H1 (cell line): ENCODE measurements at regions of chr1 and their contacts with region 1.

Region 1: GRCh38 chr1:182397771-182398393 is 2.6 kb downstream of the TEDDM1 start:
- DNase-seq: no peak
- H3K4me3 ChIP-seq: no peak overlapping the region
- H3K27ac ChIP-seq: no peak overlapping the region
- H3K4me1 ChIP-seq: peaks cover 3 to 4% (median 3%) of the 10 kb centered on the region in 4 experiments; a peak in 4 of 7 replicates
- H3K27me3 ChIP-seq: no peaks in the 10 kb centered on the region; a peak in 1 of 7 replicates
- CTCF ChIP-seq: no peak
- EP300 ChIP-seq: no peak
- POLR2A ChIP-seq: no peak
- RAD21 ChIP-seq: no peak

Region 2: DNA sequence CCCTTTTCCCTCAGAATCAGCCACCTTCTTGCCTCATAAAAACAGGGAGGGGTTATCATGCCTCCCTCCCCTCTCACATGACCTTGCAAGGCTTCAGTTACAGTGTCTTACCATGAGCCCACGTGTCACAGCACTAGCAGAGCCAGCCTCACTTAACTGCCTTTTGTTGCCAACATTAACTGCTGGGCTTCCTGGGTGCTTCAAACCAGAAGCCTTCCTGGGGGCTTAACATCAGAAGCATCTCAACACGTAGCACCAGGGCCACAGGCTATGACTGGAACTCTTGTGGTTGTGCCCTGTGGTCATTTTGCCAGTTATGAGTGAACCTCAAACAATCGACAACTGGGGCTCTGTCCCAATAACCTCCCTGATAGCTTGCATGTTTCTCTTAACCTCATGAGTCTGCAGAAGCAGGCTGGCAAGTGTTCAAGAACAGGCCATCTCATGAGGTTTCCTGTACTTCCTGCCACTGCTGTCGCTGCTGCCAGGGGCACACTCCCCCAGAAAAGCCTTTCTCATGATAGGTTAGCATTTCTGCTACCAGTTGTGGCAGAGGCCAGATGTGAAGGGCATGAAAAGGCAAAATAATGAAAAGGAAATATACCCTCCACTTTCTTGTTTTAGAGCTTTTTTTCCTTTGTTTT is 138.5 kb before region 1 on chr1:
- CTCF ChIA-PET with region 1: no interaction called
- POLR2A ChIA-PET with region 1: no interaction called
- DNase-seq: no peak
- H3K4me3 ChIP-seq: no peak overlapping the region
- H3K27ac ChIP-seq: no peak overlapping the region
- H3K4me1 ChIP-seq: no peaks in the 10 kb centered on the region
- H3K27me3 ChIP-seq: no peaks in the 10 kb centered on the region
- CTCF ChIP-seq: no peak
- EP300 ChIP-seq: no peak
- POLR2A ChIP-seq: no peak
- RAD21 ChIP-seq: no peak

Region 3: DNA sequence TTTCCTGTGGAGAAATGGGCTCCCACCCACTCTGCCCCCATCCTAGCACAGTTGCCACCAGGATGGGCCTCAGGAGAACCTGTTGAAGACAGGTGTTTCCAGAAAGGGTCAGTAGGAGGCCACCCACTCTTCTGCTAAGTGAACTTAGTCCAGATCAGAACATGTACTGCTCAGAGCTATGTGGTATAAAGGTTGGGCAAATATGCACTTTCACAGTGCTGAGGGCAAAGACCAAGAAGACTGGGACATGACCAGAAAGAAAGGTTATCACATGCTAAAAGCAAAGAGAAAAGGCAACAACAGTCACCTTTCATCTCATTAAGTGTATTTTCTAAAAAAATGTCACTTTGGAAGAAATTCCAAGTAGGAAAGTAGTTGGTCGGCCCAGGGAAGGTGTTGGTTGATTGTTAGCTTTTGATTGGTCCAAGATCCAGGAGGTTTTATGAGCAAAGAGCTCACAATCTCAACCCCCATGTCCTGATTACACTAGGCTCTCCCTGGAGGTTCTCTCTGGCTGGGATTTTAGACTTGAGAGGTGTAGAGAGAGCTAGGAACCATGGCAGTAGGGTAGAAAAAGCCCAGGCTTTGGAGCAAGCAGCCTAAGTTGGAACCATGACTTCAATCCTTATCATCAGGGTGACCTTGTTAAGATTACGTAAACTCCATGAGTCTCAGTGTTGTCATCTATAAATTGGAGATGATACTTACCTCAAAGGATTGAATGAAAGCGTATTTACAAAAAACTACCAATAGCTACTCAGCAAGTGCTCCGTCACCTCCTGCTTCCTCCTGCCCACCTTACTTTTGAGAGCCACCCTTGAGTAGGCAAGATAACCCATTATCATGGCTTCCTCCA is 108.9 kb before region 1 on chr1:
- CTCF ChIA-PET with region 1: interaction called, 15 read pairs
- POLR2A ChIA-PET with region 1: no interaction called
- DNase-seq: no peak
- H3K4me3 ChIP-seq: no peak overlapping the region
- H3K27ac ChIP-seq: no peak overlapping the region
- H3K4me1 ChIP-seq: no peaks in the 10 kb centered on the region
- H3K27me3 ChIP-seq: no peaks in the 10 kb centered on the region
- CTCF ChIP-seq: no peak
- EP300 ChIP-seq: no peak
- POLR2A ChIP-seq: no peak
- RAD21 ChIP-seq: no peak

Region 4: GRCh38 chr1:182301467-182302198 is 96.2 kb before region 1 on chr1:
- CTCF ChIA-PET with region 1: interaction called, 22 read pairs
- POLR2A ChIA-PET with region 1: no interaction called
- DNase-seq: no peak
- H3K4me3 ChIP-seq: no peak overlapping the region
- H3K27ac ChIP-seq: no peak overlapping the region
- H3K4me1 ChIP-seq: peaks cover 0 to 3% (median 0%) of the 10 kb centered on the region in 4 experiments; a peak in 3 of 7 replicates
- H3K27me3 ChIP-seq: no peaks in the 10 kb centered on the region
- CTCF ChIP-seq: peak in 2 of 3 experiments; percentile 12 to 25; a peak in 2 of 4 replicates
- EP300 ChIP-seq: no peak
- POLR2A ChIP-seq: no peak
- RAD21 ChIP-seq: peak; percentile 51 to 68

Region 5: GRCh38 chr1:182357913-182358312 is 40.0 kb before region 1 on chr1:
- CTCF ChIA-PET with region 1: interaction called, 27 read pairs
- POLR2A ChIA-PET with region 1: no interaction called
- DNase-seq: no peak
- H3K4me3 ChIP-seq: no peak overlapping the region
- H3K27ac ChIP-seq: no peak overlapping the region
- H3K4me1 ChIP-seq: peaks cover 2 to 18% (median 9%) of the 10 kb centered on the region in 4 experiments; a peak in 5 of 7 replicates
- H3K27me3 ChIP-seq: no peaks in the 10 kb centered on the region
- CTCF ChIP-seq: no peak
- EP300 ChIP-seq: no peak
- POLR2A ChIP-seq: no peak
- RAD21 ChIP-seq: no peak

Region 6: DNA sequence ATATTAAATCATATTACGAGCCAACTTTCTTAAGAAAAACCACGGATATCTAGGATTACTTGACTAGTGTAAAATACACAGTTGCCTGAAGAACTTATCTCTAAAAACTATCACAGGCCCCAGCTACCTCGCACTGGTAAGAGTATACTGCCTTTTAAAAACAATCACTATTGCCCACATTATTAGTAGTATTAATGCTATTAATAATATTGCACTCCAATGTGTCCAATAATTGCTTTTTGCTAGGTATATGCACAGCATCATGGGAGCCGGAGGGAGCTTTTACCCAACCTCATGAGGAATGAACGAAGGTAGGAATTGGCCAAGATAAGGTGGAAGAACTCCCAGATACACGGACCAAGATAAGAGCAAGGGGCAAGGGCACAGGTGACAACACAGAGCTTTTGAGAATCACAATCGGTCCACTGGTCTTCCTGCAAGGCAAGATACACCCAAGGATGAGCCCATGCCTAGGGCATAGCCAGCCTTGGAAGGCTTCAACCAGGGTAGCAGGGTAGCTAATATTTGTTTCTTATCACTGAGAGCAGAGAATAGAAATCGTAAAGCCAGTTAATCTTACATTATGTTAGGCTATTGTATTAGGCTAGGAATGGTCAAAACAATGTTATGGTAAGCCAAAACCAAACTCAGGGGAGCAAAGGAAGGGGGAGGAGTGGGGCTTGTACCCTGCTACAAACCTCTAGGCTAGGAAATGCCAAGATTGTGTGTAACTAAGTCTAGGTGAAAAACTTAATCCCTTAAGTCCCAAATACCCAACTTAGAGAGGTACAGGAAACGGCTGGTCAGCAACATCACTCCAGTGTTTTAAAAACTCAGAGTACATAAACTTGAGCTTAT is 15.7 kb before region 1 on chr1:
- CTCF ChIA-PET with region 1: interaction called, 14 read pairs
- POLR2A ChIA-PET with region 1: interaction called, 6 read pairs
- DNase-seq: no peak
- H3K4me3 ChIP-seq: no peak overlapping the region
- H3K27ac ChIP-seq: no peak overlapping the region
- H3K4me1 ChIP-seq: no peaks in the 10 kb centered on the region
- H3K27me3 ChIP-seq: no peaks in the 10 kb centered on the region
- CTCF ChIP-seq: no peak
- EP300 ChIP-seq: no peak
- POLR2A ChIP-seq: peak in 1 of 2 experiments; percentile 72; a peak in 2 of 3 replicates
- RAD21 ChIP-seq: no peak

Region 7: GRCh38 chr1:182410620-182411273 is 12.9 kb after region 1 on chr1:
- CTCF ChIA-PET with region 1: interaction called, 32 read pairs
- POLR2A ChIA-PET with region 1: interaction called, 4 read pairs
- DNase-seq: no peak
- H3K4me3 ChIP-seq: no peak overlapping the region
- H3K27ac ChIP-seq: no peak overlapping the region
- H3K4me1 ChIP-seq: peaks cover 0 to 5% (median 0%) of the 10 kb centered on the region in 4 experiments; a peak in 1 of 7 replicates
- H3K27me3 ChIP-seq: no peaks in the 10 kb centered on the region
- CTCF ChIP-seq: no peak
- EP300 ChIP-seq: no peak
- POLR2A ChIP-seq: no peak
- RAD21 ChIP-seq: no peak

Region 8: DNA sequence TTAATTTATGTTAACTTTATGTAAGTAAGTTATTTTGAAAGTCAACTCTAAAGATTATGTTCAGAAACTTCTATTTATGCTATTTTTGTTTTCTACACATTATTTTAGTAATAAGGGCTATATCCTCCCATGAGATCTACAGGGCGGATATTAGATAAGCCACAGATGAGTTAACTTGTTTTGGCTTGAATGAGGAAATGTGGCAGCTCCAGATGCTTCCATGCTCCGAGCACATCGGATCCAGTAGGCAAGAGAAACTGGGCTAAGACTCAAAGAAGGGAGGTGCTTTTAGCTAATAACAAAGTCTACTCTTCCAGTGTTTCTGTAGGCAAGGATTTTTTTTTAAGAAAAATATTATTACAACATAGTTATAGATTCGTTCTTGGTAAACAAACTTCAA is 605.3 kb after region 1 on chr1:
- CTCF ChIA-PET with region 1: no interaction called
- POLR2A ChIA-PET with region 1: no interaction called
- DNase-seq: no peak
- H3K4me3 ChIP-seq: no peak overlapping the region
- H3K27ac ChIP-seq: no peak overlapping the region
- H3K4me1 ChIP-seq: no peaks in the 10 kb centered on the region
- H3K27me3 ChIP-seq: no peaks in the 10 kb centered on the region
- CTCF ChIP-seq: no peak
- EP300 ChIP-seq: no peak
- POLR2A ChIP-seq: no peak
- RAD21 ChIP-seq: no peak